ENCODE measurements at regions of chr5 and their contacts with region 1.

Region 1: GRCh38 chr5:146049014-146049703 is 56.2 kb downstream of the PLAC8L1 start:
- DNase-seq: peak; percentile 58
- ATAC-seq: no peak
- H3K4me3 Mint-ChIP-seq: no peak overlapping the region
- H3K27ac Mint-ChIP-seq: no peak overlapping the region
- H3K4me1 Mint-ChIP-seq: no peaks in the 10 kb centered on the region
- H3K27me3 Mint-ChIP-seq: peaks cover 9% of the 10 kb centered on the region

Region 2: DNA sequence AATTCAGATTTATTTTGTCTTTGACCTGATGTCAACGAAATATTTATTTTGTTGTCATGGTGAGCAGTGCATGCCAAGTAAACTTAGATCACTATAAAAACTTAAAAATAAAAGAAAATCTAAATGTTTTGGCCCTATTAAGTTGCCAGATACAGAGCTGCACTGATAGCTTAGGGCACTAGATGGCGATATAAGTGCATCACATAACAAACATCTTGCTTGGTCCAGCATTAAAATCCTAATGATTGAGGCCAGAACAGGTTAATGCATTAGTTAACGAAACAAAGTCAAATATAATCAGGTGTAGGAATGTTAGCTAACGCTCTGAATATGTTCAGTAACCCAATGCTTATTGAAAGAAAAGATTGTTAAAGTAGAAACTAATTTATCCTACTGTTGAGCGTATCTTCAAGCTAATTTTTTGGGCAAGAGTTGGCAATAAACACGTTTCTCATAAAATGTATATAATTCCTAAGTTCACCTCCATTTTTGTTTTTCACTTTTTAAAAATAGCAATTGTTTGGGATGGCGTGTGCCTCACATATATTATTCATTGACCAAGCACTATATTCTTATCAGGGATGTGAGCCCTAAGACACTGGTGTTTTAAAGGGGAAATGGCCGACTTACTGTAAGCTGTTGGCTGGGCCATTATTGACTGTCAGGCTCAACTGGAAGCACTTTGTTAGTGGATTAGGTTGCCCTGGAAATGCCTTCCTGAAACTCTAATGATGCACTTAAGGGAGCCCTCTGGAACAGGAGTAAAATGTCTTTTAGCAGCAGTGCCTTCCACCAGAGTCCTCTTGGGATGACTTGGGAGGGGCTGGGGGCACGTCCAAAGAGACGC is 1845.2 kb before region 1 on chr5:
- CTCF ChIA-PET with region 1: no interaction called
- POLR2A ChIA-PET with region 1: no interaction called
- intact Hi-C with region 1: loop called (anchors 5 to 10 kb)
- DNase-seq: peak; percentile 44
- ATAC-seq: peak; percentile 61
- H3K4me3 Mint-ChIP-seq: no peak overlapping the region
- H3K27ac Mint-ChIP-seq: no peak overlapping the region
- H3K4me1 Mint-ChIP-seq: peaks cover 17% of the 10 kb centered on the region
- H3K27me3 Mint-ChIP-seq: peaks cover 44% of the 10 kb centered on the region

Region 3: DNA sequence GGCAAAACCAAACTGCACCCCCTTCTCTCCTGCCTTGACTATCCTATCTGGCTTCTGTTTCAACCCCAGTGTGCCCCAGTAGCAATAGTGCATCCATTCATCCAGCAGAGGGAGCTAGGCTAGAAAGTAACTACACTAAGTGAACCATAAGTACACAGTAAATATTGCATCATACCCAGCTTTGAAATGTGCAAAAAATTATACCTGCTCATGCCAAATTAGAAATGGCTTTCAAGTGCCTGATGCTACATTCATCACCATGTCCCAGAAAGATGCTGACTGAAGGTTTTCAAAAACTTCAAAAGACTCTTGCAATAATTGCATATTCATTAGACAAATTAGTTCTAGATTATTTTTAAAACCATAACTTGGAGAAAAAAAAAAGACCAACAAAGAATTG is 367.5 kb before region 1 on chr5:
- CTCF ChIA-PET with region 1: interaction called, 5 read pairs
- POLR2A ChIA-PET with region 1: no interaction called
- intact Hi-C with region 1: loop called (anchors 1 to 5 kb)
- DNase-seq: peak; percentile 60
- ATAC-seq: peak; percentile 94
- H3K4me3 Mint-ChIP-seq: no peak overlapping the region
- H3K27ac Mint-ChIP-seq: no peak overlapping the region
- H3K4me1 Mint-ChIP-seq: peaks cover 3% of the 10 kb centered on the region
- H3K27me3 Mint-ChIP-seq: no peaks in the 10 kb centered on the region

Region 4: GRCh38 chr5:145697251-145697990 is 351.7 kb before region 1 on chr5:
- CTCF ChIA-PET with region 1: interaction called, 3 read pairs
- POLR2A ChIA-PET with region 1: no interaction called
- intact Hi-C with region 1: loop called (anchors 1 kb)
- DNase-seq: peak; percentile 46
- ATAC-seq: no peak
- H3K4me3 Mint-ChIP-seq: no peak overlapping the region
- H3K27ac Mint-ChIP-seq: no peak overlapping the region
- H3K4me1 Mint-ChIP-seq: no peaks in the 10 kb centered on the region
- H3K27me3 Mint-ChIP-seq: no peaks in the 10 kb centered on the region

Region 5: DNA sequence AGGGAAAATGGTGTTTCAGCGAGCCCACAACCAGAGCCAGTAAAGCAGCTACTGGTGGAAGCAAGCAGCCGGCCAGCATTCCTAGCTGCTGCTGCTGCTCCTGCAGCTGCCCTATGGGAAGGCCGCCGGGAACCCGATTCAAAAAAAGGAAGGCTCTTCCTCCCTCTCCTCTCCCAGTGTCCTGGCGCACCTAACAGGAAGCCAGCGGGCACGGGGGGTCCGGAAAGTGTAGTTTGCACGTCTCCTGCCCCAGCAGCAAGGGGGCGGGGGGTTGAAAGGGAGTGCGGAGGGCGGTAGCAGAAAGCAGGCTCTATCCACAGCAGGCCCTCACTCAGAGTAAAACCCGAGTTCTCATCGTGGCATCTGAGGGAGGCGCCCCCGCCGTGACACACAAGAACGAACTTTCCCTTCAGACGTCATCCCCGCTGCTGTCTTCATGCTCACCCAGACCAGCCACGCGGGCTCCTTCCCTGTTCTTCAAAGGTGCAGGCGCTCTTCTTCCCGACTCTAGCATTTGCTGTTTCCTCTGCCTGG is 192.8 kb before region 1 on chr5:
- CTCF ChIA-PET with region 1: no interaction called
- POLR2A ChIA-PET with region 1: no interaction called
- intact Hi-C with region 1: loop called in 1 of 2 experiments (anchors 10 kb)
- DNase-seq: peak; percentile 75
- ATAC-seq: peak; percentile 99
- H3K4me3 Mint-ChIP-seq: no peak overlapping the region
- H3K27ac Mint-ChIP-seq: no peak overlapping the region
- H3K4me1 Mint-ChIP-seq: peaks cover 4% of the 10 kb centered on the region
- H3K27me3 Mint-ChIP-seq: peaks cover 7% of the 10 kb centered on the region

Measured in activated CD4-positive, alpha-beta T cell treated with anti-CD3 and anti-CD28 coated beads for 36 hours (primary cell).